ENCODE measurements at regions of chr16 and their contacts with region 1.

Region 1: GRCh38 chr16:58129097-58129936 is at the start of gene CFAP20:
- DNase-seq: peak; percentile 96
- H3K4me3 Mint-ChIP-seq: peak within 1 kb of the TSS; percentile 84
- H3K27ac Mint-ChIP-seq: peak within 1 kb of the TSS; percentile 83
- H3K4me1 Mint-ChIP-seq: peaks cover 32% of the 10 kb centered on the region
- H3K27me3 Mint-ChIP-seq: no peaks in the 10 kb centered on the region
- total RNA-seq, gene CFAP20: 64.9 and 65.2 TPM in 2 replicates

Region 2: GRCh38 chr16:56931892-56932720 is 1197.2 kb before region 1 on chr16 and contains the start of gene HERPUD1:
- intact Hi-C with region 1: loop called (anchors 10 kb)
- DNase-seq: peak; percentile 99
- H3K4me3 Mint-ChIP-seq: peak within 1 kb of the TSS; percentile 95
- H3K27ac Mint-ChIP-seq: peak within 1 kb of the TSS; percentile 94
- H3K4me1 Mint-ChIP-seq: peaks cover 41% of the 10 kb centered on the region
- H3K27me3 Mint-ChIP-seq: no peaks in the 10 kb centered on the region
- total RNA-seq, gene HERPUD1: 176 and 178 TPM in 2 replicates

Region 3: GRCh38 chr16:57810197-57811031 is 318.9 kb before region 1 on chr16:
- intact Hi-C with region 1: loop called (anchors 5 kb)
- DNase-seq: peak; percentile 80
- H3K4me3 Mint-ChIP-seq: peak overlapping the region; percentile 61
- H3K27ac Mint-ChIP-seq: peak overlapping the region; percentile 83
- H3K4me1 Mint-ChIP-seq: peaks cover 36% of the 10 kb centered on the region
- H3K27me3 Mint-ChIP-seq: peaks cover 18% of the 10 kb centered on the region

Region 4: DNA sequence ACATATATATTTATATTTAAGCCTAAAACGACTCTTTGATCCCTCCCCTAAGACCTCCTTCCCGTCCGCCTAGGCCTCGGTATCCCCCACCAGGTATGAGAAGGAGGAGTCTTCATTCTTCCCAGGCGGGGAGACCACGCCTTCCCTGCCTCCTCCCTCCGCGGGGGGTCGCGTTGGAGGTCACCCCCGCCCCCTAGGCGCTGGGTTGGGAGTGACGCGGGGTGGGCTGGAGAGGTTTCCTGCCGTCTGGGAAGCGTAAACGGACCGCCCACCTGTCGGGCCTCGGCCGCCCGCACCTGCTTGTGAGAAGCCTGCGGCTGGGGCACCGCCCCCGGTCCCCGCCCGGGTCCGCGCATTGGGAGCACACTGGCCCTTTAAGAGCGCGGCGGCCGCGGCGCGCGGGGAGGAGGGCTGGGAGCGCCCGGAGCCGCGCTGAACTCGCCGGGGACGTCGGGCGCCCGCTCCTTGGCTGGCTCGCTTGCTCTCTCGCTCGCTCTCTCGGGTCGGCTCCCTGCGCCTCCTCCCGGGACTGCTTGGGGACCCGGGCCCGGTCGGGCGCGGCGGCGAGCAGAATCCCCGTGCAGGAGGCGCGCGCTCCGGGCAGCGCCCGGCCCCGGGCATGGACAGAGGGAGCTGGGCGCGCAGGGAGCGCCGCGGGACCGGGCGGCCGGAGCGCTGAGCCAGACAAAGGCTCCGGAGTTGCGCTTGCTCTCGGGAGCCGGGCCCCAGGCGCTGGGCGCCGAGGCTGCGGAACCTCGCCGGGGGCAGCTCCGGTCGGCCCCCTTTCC is 103.8 kb before region 1 on chr16 and contains the start of gene MMP15:
- intact Hi-C with region 1: loop called (anchors 1 kb)
- DNase-seq: peak; percentile 51
- H3K4me3 Mint-ChIP-seq: peak within 1 kb of the TSS; percentile 89
- H3K27ac Mint-ChIP-seq: peak within 1 kb of the TSS; percentile 77
- H3K4me1 Mint-ChIP-seq: peaks cover 13% of the 10 kb centered on the region
- H3K27me3 Mint-ChIP-seq: peaks cover 28% of the 10 kb centered on the region
- total RNA-seq, gene MMP15: 1.1 and 1.3 TPM in 2 replicates

Region 5: DNA sequence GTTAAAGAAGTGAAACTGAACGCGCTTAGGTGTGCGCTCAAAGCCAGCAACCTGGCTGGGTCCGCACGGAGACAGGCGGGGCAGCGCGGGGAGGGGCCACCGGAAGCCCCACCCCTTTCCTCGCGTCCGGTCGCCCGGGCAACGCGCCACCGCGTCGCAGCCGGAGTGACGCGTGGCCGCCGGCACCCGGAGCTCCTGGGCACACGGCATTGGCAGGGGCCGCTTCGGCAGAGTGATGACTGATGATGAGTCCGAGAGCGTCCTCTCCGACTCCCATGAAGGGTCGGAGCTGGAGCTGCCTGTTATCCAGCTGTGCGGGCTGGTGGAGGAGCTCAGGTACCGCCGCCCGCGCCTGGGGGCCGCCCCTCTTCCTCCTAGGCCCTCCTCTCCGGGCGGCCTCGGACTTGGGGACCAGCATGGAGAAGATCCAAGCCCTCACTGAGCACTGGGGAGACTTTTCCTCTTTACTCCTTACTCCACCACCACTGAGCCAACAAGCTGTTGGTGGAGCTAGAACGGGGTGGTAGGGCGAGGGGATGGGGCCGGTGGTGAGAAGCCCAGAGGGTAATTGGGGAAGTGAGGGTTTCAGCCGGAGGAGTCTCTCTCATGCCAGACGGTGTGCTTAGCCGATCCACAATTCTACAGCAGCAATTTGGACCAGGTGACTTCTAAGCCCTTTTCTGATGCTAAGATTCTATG is 120.6 kb after region 1 on chr16:
- intact Hi-C with region 1: loop called (anchors 1 kb)
- DNase-seq: peak; percentile 83
- H3K4me3 Mint-ChIP-seq: peak overlapping the region; percentile 86
- H3K27ac Mint-ChIP-seq: no peak overlapping the region
- H3K4me1 Mint-ChIP-seq: peaks cover 6% of the 10 kb centered on the region
- H3K27me3 Mint-ChIP-seq: peaks cover 4% of the 10 kb centered on the region

Region 6: GRCh38 chr16:58515125-58515870 is 386.0 kb after region 1 on chr16 and contains the start of gene SETD6:
- intact Hi-C with region 1: loop called (anchors 1 kb)
- DNase-seq: peak; percentile 77
- H3K4me3 Mint-ChIP-seq: peak within 1 kb of the TSS; percentile 92
- H3K27ac Mint-ChIP-seq: peak within 1 kb of the TSS; percentile 83
- H3K4me1 Mint-ChIP-seq: peaks cover 36% of the 10 kb centered on the region
- H3K27me3 Mint-ChIP-seq: no peaks in the 10 kb centered on the region
- total RNA-seq, gene SETD6: 32.1 and 34.9 TPM in 2 replicates